Activated naive CD4-positive, alpha-beta T cell treated with anti-CD3 and anti-CD28 coated beads for 36 hours (primary cell): ENCODE measurements at regions of chr17 and their contacts with region 1.

Region 1: DNA sequence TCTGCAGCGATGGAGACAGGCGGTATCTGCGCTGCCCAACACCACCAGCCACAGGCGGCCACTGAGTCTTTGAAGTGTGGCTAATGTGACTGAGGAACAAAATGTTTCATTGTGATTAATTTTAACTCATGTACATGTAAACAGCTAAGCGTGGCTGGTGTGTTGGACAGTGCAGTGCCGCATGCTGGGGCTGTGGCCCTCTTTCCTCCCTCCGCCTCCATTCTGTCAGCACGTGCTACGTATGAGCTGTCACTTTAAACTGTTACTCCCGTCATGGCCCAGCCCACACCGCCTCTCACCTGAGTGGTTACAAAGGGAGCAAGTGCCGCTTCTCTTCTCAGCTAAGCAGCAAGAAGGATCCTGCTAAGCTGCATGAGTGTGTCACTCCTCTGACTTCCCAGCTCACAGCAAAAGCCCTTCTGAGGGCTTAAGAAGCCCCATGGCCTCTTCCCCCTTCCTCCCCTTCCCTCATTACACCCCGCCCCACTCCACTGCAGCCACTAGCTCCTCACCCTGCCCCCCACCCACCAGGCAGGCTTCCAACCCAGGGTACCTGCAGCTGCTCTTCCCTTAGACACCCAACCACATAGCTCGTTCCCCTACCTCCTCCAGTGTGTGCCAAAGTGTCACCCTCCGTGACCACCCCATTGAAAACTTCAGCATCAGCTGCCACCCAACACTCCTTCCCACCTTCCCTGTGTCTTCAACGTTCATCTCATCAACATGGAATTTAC is 15.0 kb downstream of the HASPIN start:
- DNase-seq: peak; percentile 87
- H3K4me3 Mint-ChIP-seq: peak overlapping the region; percentile 25
- H3K27ac Mint-ChIP-seq: peak overlapping the region; percentile 4
- H3K4me1 Mint-ChIP-seq: peaks cover 32% of the 10 kb centered on the region
- H3K27me3 Mint-ChIP-seq: no peaks in the 10 kb centered on the region

Region 2: DNA sequence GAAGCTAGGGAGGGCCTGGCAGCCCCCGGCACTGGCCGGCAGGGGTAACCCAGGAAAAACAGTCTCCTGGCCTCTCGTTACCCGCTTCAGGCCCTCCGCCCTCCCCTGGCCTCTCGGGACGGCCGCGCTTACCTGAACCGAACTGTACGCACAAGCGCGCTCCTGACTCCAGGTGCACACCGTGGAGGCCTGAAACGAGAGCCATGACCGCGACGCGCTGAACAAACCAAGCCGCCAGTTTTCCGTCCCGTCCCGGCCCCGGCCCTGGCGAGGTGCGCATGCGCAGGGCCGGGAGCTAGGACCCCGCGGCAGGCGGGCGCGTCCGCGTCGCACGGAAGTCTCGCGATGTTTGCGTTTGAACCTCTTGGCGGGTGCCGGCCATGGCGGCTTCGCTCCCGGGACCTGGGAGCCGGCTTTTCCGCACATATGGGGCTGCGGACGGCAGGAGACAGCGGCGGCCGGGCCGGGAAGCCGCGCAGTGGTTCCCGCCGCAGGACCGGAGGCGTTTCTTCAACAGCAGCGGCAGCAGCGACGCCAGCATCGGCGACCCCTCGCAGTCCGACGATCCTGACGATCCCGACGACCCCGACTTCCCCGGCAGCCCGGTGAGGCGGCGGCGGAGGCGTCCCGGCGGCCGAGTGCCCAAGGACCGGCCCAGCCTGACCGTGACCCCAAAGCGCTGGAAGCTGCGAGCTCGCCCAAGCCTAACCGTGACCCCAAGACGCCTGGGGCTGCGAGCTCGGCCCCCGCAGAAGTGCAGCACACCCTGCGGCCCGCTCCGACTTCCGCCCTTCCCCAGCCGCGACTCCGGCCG is 15.0 kb before region 1 on chr17 and contains the start of gene HASPIN:
- CTCF ChIA-PET with region 1: interaction called, 35 read pairs
- intact Hi-C with region 1: no loop called
- DNase-seq: peak; percentile 94
- H3K4me3 Mint-ChIP-seq: peak within 1 kb of the TSS; percentile 93
- H3K27ac Mint-ChIP-seq: peak within 1 kb of the TSS; percentile 89
- H3K4me1 Mint-ChIP-seq: peaks cover 57% of the 10 kb centered on the region
- H3K27me3 Mint-ChIP-seq: no peaks in the 10 kb centered on the region
- total RNA-seq, gene HASPIN: 20.5 to 21.8 TPM

Region 3: DNA sequence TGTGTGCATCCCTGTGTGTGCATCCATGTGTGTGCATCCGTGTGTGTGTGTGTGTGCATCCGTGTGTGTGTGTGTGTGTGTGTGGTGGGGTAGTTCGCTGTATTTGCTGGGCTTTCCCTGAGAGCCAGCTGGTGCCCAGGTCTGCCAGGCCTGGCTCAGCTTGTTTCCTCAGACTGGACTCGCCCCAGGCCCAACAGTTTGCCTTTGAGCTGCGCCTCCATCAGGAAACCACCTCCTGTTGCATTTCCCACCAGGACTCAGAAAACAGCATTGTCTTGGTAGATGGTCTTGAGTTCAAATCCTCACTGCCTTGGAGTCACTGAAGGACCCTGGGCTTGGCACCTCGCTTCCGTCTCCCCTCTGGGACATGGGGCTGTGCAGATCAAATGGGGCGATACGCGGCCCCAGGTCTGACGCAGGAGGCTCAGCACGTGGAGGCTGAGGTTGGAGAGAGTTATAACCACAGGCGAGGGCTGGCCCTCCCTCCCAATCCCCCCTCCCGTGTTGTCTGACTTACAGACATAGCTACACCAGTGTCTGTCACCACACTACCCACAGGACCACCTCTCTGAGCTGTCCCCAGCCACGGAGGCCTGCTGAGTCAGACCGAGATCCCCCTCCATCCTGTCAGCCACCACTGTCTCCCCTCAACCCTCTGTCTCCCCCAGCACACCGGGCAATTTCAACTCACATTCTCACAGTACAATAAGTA is 57.5 kb after region 1 on chr17:
- CTCF ChIA-PET with region 1: interaction called, 14 read pairs
- intact Hi-C with region 1: no loop called
- DNase-seq: peak; percentile 49
- H3K4me3 Mint-ChIP-seq: no peak overlapping the region
- H3K27ac Mint-ChIP-seq: no peak overlapping the region
- H3K4me1 Mint-ChIP-seq: peaks cover 10% of the 10 kb centered on the region
- H3K27me3 Mint-ChIP-seq: no peaks in the 10 kb centered on the region

Region 4: DNA sequence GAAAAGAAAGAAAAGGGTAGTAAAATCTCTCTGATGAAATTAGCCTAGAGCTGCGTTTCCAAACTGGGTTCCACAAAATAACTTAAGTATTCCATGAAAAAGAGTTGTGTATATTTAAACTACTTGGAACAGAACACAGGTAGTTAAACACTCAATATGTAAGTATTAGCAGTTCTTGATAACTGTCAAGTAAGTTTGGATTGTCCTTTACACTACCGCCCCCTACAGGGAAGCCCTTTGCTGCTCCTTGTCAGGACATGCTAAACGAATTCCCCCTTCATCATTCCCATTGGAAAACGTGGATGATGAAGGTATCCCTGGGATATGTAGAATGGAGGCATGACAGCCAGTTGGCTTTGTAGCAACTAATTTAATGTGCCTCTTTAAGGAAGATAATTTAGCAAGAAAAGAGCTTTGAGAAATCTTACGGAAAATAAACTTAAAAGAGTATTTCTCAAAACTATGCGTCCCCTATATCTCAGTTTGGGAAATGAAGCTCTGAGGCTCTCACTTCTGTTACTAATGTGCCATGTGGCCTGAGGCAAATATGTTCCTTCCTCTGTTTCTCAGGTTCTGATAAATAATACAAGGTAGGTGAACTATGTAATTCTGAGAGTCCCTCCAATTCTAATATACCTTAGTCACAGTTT is 88.5 kb after region 1 on chr17:
- CTCF ChIA-PET with region 1: interaction called, 205 read pairs
- intact Hi-C with region 1: loop called (anchors 1 kb)
- DNase-seq: peak; percentile 89
- H3K4me3 Mint-ChIP-seq: no peak overlapping the region
- H3K27ac Mint-ChIP-seq: no peak overlapping the region
- H3K4me1 Mint-ChIP-seq: peaks cover 2% of the 10 kb centered on the region
- H3K27me3 Mint-ChIP-seq: no peaks in the 10 kb centered on the region

Region 5: GRCh38 chr17:3913531-3914311 is 175.0 kb after region 1 on chr17:
- CTCF ChIA-PET with region 1: interaction called, 14 read pairs
- intact Hi-C with region 1: loop called (anchors 5 kb)
- DNase-seq: peak; percentile 90
- H3K4me3 Mint-ChIP-seq: no peak overlapping the region
- H3K27ac Mint-ChIP-seq: no peak overlapping the region
- H3K4me1 Mint-ChIP-seq: peaks cover 50% of the 10 kb centered on the region
- H3K27me3 Mint-ChIP-seq: no peaks in the 10 kb centered on the region